ENCODE measurements at regions of chr14 and their contacts with region 1.

Region 1: DNA sequence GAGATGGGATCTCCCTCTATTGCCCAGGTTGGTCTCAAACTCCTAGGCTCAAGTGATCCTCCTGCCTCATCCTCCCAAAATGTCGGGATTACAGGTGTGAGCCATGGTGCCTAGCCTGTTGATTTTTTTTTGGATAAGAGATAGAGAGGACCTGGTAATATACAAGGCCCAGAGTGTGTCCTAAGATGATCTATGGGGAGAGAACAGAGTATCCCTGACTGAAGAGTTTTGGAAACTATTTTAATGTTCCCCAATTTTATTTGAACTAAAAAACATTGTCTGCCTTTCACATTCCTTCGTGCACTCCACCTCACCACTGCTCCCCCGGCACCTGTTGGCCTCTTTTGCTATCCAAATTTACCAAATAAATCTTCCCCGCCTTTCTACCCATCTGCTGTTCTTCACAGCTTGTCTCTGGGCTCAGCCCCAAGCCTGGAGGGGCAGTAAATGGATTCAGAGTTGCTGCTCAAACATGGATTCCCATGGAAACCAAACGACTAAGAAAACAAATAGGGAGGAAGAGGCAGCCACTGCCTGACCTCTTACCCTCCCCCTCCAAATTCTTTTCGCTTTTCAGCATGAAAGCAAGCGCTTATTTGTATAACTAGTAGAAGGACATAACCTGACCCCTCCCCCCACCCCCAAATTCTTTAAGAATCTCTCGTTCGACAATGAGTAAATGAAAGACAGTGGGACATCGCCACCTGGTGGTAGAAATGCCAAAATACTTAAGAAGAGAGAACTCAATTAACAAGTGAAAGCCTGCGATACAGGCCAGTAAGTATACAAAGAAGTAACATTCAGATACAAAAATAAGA is 22.6 kb downstream of the OR10G3 start:
- DNase-seq: peak; percentile 96

Region 2: DNA sequence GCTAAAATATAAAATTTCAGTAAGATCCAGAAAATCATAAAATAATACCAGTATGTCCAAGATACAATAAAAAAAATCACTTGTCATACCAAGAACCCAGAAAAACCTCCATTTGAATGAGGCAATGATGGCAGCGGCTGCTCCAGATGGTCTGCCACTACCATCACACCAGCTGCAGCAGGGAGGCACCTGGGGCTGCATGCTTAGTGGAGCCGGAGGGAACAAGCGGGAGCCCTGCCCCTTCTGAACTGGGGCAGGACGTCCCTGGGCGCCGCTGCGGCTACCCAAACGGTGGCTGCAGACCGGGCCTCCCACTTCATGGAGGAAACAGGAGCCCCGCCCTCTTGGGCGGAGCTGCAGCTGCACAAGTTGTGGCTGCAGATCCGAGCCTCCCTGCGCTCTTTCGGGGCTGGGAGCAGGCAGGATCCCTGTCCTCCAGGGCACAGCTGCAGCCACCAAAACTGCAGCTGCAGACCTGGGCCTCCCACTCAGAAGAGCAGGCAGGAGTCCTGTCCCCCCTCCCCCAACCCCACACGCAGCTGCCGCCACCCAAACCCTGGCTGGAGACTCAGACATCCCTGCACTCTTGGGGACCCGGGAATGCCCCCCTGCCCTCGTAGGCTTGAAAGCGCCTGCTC is 365.4 kb before region 1 on chr14:
- in situ Hi-C with region 1: no loop called
- DNase-seq: peak; percentile 61

Region 3: GRCh38 chr14:21408147-21408546 is 149.1 kb before region 1 on chr14:
- in situ Hi-C with region 1: loop called (anchors 10 kb)
- DNase-seq: no peak

Region 4: GRCh38 chr14:21589317-21589716 is 32.0 kb after region 1 on chr14:
- in situ Hi-C with region 1: no loop called
- DNase-seq: no peak

Region 5: GRCh38 chr14:21617614-21618013 is 60.3 kb after region 1 on chr14:
- in situ Hi-C with region 1: no loop called
- DNase-seq: no peak

Measured in G401 (cell line).